Caco-2 (cell line): ENCODE measurements at regions of chr1 and their contacts with region 1.

Region 1: GRCh38 chr1:171313835-171314320 is at the start of gene FMO4:
- DNase-seq: peak; percentile 91 to 95
- H3K4me3 ChIP-seq: peak within 1 kb of the TSS; percentile 21
- H3K4me3 Mint-ChIP-seq: peak within 1 kb of the TSS; percentile 67
- H3K27ac Mint-ChIP-seq: peak within 1 kb of the TSS; percentile 74
- H3K4me1 ChIP-seq: peaks cover 9% of the 10 kb centered on the region
- H3K4me1 Mint-ChIP-seq: no peaks in the 10 kb centered on the region
- H3K27me3 ChIP-seq: no peaks in the 10 kb centered on the region
- H3K27me3 Mint-ChIP-seq: no peaks in the 10 kb centered on the region
- CTCF ChIP-seq: peak; percentile 79 to 80
- total RNA-seq, gene FMO4: 2.3 and 3.8 TPM in 2 replicates

Region 2: GRCh38 chr1:171014878-171015277 is 299.0 kb before region 1 on chr1:
- CTCF ChIA-PET with region 1: no interaction called
- POLR2A ChIA-PET with region 1: no interaction called
- intact Hi-C with region 1: no loop called
- DNase-seq: no peak
- H3K4me3 ChIP-seq: no peak overlapping the region
- H3K4me3 Mint-ChIP-seq: no peak overlapping the region
- H3K27ac Mint-ChIP-seq: no peak overlapping the region
- H3K4me1 ChIP-seq: no peaks in the 10 kb centered on the region
- H3K4me1 Mint-ChIP-seq: no peaks in the 10 kb centered on the region
- H3K27me3 ChIP-seq: no peaks in the 10 kb centered on the region
- H3K27me3 Mint-ChIP-seq: peaks cover 12% of the 10 kb centered on the region
- CTCF ChIP-seq: no peak

Region 3: GRCh38 chr1:171081314-171081753 is 232.5 kb before region 1 on chr1:
- CTCF ChIA-PET with region 1: interaction called, 21 read pairs
- POLR2A ChIA-PET with region 1: no interaction called
- intact Hi-C with region 1: loop called (anchors 1 kb)
- DNase-seq: peak in 1 of 2 experiments; percentile 4
- H3K4me3 ChIP-seq: no peak overlapping the region
- H3K4me3 Mint-ChIP-seq: no peak overlapping the region
- H3K27ac Mint-ChIP-seq: no peak overlapping the region
- H3K4me1 ChIP-seq: peaks cover 7% of the 10 kb centered on the region; the same call in 1 of the 2 replicates
- H3K4me1 Mint-ChIP-seq: no peaks in the 10 kb centered on the region
- H3K27me3 ChIP-seq: no peaks in the 10 kb centered on the region
- H3K27me3 Mint-ChIP-seq: no peaks in the 10 kb centered on the region
- CTCF ChIP-seq: peak; percentile 21 to 40

Region 4: GRCh38 chr1:171152549-171152948 is 161.3 kb before region 1 on chr1:
- CTCF ChIA-PET with region 1: no interaction called
- POLR2A ChIA-PET with region 1: no interaction called
- intact Hi-C with region 1: no loop called
- DNase-seq: no peak
- H3K4me3 ChIP-seq: no peak overlapping the region
- H3K4me3 Mint-ChIP-seq: no peak overlapping the region
- H3K27ac Mint-ChIP-seq: no peak overlapping the region
- H3K4me1 ChIP-seq: no peaks in the 10 kb centered on the region
- H3K4me1 Mint-ChIP-seq: no peaks in the 10 kb centered on the region
- H3K27me3 ChIP-seq: no peaks in the 10 kb centered on the region
- H3K27me3 Mint-ChIP-seq: no peaks in the 10 kb centered on the region
- CTCF ChIP-seq: no peak

Region 5: DNA sequence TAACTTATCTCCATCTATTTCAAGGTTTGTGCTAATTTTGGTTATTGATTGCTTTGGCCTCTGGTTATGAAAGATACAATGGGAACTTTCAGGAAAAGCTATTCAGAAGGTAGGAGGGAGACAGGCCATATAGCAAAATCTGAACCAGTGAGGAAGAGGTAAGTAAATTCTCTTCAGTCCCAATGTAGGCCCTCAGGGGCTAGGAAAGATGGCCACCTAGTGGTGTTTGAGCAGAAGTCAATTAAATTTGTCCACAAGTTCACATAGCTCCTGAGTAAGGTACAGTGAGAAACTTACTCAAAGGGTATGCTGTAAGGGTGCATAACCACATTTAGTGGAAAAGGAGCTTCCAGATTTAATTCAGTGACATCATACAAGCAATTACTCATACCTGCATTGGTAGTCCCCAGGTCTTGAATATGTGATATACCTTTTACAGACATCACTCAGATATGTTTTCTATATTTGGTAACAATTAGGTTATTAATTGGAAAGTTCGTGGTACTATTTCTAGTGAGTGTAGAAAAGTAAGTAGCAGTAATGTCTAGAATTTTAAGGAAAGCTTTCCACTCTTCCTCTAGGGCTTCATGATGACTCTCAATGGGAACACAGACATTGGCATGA is 87.0 kb before region 1 on chr1:
- CTCF ChIA-PET with region 1: interaction called, 20 read pairs
- POLR2A ChIA-PET with region 1: no interaction called
- intact Hi-C with region 1: no loop called
- DNase-seq: peak; percentile 60 to 66
- H3K4me3 ChIP-seq: no peak overlapping the region
- H3K4me3 Mint-ChIP-seq: no peak overlapping the region
- H3K27ac Mint-ChIP-seq: no peak overlapping the region
- H3K4me1 ChIP-seq: no peaks in the 10 kb centered on the region
- H3K4me1 Mint-ChIP-seq: peaks cover 6% of the 10 kb centered on the region
- H3K27me3 ChIP-seq: no peaks in the 10 kb centered on the region
- H3K27me3 Mint-ChIP-seq: no peaks in the 10 kb centered on the region
- CTCF ChIP-seq: peak; percentile 80 to 83

Region 6: DNA sequence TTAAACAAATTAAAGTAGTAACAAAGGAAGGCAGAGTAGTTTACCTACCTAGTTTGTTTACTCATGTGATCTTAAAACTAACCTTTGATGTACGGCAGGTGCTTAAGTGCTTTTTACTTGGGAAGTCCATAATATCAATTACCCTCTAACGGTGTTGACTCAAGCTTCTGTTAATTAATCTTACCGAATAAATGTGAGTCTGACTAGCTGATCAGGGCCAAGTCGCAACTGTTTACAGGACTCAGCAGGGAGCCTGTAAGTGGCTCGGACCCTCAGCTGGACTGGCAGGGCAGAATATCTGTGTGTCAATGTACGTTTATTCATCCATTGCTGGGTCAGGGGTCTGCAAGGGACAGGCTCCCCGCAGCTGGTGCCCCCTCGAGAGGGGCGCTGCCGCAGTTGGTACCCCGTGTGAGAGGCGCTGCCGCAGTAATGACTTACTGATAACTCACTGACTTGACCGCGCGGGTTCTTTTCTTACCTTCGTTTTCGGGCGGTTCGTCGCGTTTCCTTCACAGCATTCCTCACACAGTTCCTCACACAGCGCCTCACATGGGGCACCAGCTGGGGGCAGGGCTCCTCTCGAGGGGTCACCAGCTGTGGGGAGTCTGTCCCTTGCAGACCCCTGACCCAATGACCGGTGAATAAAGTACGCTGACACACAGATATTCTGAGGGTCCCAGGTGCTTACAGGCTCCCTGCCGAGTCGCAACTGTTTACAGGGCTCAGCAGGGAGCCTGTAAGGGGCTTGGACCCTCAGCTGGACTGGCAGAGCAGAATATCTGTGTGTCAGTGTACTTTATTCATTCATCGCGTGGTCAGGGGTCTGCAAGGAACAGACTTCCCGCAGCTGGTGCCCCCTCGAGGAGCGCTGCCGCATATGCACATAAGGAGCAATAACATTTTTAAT is 62.6 kb before region 1 on chr1:
- CTCF ChIA-PET with region 1: interaction called, 70 read pairs
- POLR2A ChIA-PET with region 1: no interaction called
- intact Hi-C with region 1: loop called (anchors 1 kb)
- DNase-seq: peak; percentile 46 to 59
- H3K4me3 ChIP-seq: peak overlapping the region; percentile 83
- H3K4me3 Mint-ChIP-seq: peak overlapping the region; percentile 85
- H3K27ac Mint-ChIP-seq: peak overlapping the region; percentile 85
- H3K4me1 ChIP-seq: peaks cover 19% of the 10 kb centered on the region
- H3K4me1 Mint-ChIP-seq: peaks cover 22% of the 10 kb centered on the region
- H3K27me3 ChIP-seq: no peaks in the 10 kb centered on the region
- H3K27me3 Mint-ChIP-seq: no peaks in the 10 kb centered on the region
- CTCF ChIP-seq: peak; percentile 70 to 72

Region 7: DNA sequence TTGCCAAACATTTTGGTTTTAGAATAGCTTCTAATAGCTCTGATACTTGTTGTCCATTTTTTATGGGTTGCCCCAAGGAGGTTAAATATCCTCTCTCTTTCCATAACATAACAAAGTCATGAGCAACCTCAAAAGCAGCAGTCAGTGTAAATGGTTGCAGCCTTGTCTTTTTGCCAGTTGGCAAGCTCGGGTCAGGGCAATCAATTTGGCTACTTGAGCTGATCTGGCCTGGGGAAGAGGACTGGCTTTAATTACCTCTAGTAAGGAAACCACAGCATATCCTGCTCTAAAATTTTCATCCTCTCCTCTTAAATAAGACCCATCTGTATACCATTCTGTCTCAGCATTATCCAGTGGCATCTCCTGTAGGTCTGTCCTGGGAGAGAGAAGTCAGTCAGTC is 21.1 kb before region 1 on chr1:
- CTCF ChIA-PET with region 1: no interaction called
- POLR2A ChIA-PET with region 1: no interaction called
- intact Hi-C with region 1: no loop called
- DNase-seq: no peak
- H3K4me3 ChIP-seq: no peak overlapping the region
- H3K4me3 Mint-ChIP-seq: no peak overlapping the region
- H3K27ac Mint-ChIP-seq: no peak overlapping the region
- H3K4me1 ChIP-seq: no peaks in the 10 kb centered on the region
- H3K4me1 Mint-ChIP-seq: no peaks in the 10 kb centered on the region
- H3K27me3 ChIP-seq: no peaks in the 10 kb centered on the region
- H3K27me3 Mint-ChIP-seq: no peaks in the 10 kb centered on the region
- CTCF ChIP-seq: no peak

Region 8: DNA sequence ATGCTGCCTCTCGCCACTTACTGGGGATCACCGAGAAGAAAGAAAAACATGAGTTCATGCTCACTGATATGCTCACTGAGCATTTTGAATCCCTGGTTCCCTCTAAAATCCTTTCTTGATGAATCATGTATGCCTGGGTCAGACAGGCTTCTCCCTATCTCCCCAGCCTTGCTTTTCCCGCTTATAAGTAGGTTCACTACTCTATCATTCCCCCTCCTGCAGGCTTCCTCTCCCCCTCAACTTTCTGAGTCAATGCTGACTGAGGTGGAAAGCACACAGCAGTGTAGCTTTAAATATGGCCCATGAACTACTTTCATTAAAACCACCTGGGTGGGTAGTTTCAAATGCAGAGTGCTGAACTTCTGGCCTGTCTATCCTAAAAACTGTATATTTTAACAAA is 41.8 kb after region 1 on chr1:
- CTCF ChIA-PET with region 1: no interaction called
- POLR2A ChIA-PET with region 1: no interaction called
- intact Hi-C with region 1: no loop called
- DNase-seq: no peak
- H3K4me3 ChIP-seq: no peak overlapping the region
- H3K4me3 Mint-ChIP-seq: no peak overlapping the region
- H3K27ac Mint-ChIP-seq: no peak overlapping the region
- H3K4me1 ChIP-seq: no peaks in the 10 kb centered on the region
- H3K4me1 Mint-ChIP-seq: peaks cover 19% of the 10 kb centered on the region
- H3K27me3 ChIP-seq: no peaks in the 10 kb centered on the region
- H3K27me3 Mint-ChIP-seq: no peaks in the 10 kb centered on the region
- CTCF ChIP-seq: no peak

Region 9: GRCh38 chr1:171397851-171398469 is 84.1 kb after region 1 on chr1:
- CTCF ChIA-PET with region 1: interaction called, 17 read pairs
- POLR2A ChIA-PET with region 1: no interaction called
- intact Hi-C with region 1: loop called (anchors 10 kb)
- DNase-seq: peak; percentile 49 to 67
- H3K4me3 ChIP-seq: no peak overlapping the region
- H3K4me3 Mint-ChIP-seq: peak overlapping the region; percentile 60
- H3K27ac Mint-ChIP-seq: peak overlapping the region; percentile 96
- H3K4me1 ChIP-seq: peaks cover 68% of the 10 kb centered on the region
- H3K4me1 Mint-ChIP-seq: peaks cover 33% of the 10 kb centered on the region
- H3K27me3 ChIP-seq: no peaks in the 10 kb centered on the region
- H3K27me3 Mint-ChIP-seq: no peaks in the 10 kb centered on the region
- CTCF ChIP-seq: no peak